Motor neuron (in vitro differentiated cells): ENCODE measurements at regions of chr11 and their contacts with region 1.

Region 1: DNA sequence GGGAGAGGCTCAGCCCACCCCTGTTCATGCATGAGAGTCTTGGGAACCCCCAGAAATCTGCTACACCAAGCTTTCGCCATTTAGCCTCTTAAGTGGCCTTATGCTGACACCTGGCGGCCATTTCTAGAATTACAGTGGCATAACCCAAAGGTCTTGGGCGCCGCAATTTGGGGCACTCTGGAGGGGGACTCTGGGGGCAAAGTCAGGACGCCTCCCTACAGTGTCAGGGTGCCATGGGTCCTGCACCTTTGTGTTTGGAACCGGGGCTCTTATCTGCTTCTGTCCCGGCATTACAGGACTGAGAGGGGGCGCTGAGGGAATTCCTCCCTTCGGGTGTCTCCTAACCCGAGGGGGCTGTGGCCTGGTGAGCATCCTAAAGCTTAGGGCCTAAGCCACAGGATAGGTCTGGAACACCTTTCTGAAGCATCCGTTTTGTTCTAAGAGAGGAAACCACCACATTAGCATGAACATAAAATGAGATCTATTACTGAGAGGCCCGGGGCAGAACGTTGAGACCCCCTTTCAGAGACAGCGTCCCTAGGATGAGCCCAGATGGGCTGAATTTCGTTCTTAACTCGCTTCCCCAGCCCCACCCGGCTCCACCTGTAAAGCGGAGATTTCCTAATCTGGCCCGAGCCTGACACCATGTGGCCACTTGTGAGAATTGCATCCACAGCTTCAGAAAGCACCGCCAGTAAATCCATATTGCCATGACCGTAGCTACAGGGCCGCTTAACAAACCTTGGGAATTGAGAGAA is 9.3 kb downstream of the INS start:
- ATAC-seq: peak; percentile 19 to 62 (median 57)
- H3K4me3 ChIP-seq: peak overlapping the region in 1 of 5 donors; percentile 12
- H3K27ac ChIP-seq: no peak overlapping the region
- H3K4me1 ChIP-seq: peaks cover 11 to 21% of the 10 kb centered on the region in 2 donors

Region 2: DNA sequence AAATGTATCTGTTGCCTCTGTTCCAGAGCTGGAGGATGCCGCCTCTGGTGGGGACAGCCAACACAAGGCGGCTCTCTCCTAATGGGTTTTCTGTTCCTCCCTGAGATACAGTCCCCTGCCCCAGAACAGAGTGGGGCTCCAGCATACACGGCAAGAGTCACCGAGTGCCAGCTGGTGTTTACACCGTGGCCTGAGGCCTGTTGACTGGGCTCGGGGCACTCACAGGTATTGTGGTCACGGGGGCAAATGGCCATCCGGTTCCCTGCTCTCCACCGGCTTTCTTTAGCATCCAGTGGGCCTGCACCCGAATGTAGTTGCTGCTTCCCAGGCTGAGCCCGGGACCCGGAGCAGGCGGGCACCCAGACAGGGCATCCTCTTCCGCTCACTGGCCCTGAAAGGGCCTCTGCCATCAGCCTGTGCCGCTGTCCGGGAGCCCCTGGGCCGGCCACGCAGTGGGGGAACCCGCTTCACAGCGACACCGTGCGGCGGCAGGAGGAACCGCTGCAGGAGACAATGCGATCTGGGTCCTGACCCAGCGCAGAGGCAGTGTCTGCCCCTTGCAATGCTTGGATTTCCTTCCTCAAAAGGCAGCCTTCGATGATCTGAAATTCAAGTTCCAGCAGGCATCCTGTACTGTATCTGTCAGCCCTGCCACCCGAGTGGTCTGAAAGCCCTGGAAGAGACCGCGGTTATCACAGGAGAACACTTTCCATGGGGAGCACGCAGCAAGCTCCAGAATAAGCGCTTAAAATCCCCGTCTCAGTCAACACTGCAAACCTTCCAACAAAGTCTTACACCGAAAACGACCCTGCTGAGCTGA is 523.0 kb before region 1 on chr11:
- in situ Hi-C with region 1: loop called in 1 of 9 experiments (anchors 25 kb)
- ATAC-seq: peak; percentile 72 to 98 (median 96)
- H3K4me3 ChIP-seq: no peak overlapping the region
- H3K27ac ChIP-seq: no peak overlapping the region
- H3K4me1 ChIP-seq: peaks cover 0 to 6% of the 10 kb centered on the region in 2 donors

Region 3: DNA sequence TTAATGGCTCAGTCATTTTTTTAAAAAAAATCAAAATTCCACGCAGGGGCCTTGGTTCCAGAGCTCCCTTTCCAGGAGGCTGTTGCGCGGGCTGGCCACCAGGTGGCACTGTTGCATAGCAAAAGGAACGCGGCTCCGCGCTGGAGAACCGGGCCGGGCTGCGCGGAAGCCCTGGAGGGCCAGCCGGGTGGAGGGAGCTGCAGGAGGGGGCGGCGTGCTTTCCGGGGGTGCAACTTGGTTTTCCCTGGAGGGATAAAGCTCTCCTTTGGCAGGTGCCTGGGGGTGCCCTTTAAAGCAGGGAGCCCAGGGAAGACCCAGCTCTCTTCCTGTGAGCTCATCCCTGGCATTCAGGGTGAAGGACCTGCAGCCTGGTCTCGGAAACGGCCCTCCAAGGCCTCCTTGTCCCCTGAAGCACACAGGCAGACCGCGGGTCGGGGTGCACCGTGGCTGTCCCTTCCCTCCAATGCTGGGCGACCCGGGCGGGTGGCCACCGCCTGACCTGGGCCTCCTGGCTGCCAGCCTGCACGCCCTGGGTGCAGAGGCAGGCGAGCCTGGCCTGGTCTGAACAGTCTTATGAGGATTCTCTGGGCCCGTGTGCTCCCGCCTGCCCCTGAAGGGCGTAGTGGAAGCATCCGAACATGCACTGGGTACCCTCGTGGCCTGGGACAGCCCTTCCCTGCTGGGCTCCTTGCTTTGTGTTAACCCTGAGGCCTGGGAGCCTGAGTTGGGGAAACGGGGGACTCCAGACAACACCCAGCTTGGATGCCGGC is 498.7 kb before region 1 on chr11:
- in situ Hi-C with region 1: loop called in 5 of 9 experiments (anchors 10 to 25 kb)
- ATAC-seq: peak; percentile 74 to 98 (median 84)
- H3K4me3 ChIP-seq: no peak overlapping the region
- H3K27ac ChIP-seq: no peak overlapping the region
- H3K4me1 ChIP-seq: peaks cover 13 to 18% of the 10 kb centered on the region in 2 donors

Region 4: DNA sequence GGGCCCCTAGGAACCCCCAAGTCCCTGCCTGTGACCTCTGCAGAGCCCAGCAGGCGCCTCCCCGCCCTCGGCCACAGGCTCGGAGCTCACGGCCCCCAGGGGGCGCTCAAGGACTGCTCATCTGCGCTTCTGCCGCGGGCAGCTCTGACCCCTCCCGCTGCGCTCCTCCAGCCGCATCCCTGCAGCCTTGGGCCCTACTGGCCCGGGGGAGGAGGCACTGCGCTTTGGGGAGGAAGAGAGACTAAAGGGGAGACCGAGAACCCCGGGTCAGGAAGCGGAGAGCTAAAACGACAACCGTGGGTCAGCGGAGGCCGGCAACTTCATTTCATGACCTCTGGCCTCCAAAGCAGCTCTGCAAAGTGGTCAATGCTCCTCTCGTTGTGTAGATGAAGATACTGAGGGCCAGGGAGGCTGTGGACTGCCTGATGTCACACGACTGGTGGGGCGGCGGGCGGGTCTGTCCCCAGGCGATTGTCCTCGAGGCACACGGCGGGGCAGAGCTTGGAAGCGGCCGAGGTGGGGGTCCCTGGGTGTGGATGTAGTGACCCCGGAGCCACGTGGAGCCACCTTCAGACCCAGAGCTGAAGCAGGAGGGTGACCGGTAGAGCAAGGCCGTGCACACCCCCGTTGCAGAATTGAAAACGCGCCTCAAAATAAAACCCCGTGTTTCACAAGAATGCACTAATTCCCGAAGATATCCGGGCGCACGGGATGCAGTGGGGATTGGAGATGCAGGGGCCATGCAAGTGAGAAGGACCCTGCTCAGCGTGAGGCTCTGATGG is 457.4 kb before region 1 on chr11:
- in situ Hi-C with region 1: loop called in 2 of 9 experiments (anchors 10 to 25 kb)
- ATAC-seq: peak; percentile 86 to 96 (median 91)
- H3K4me3 ChIP-seq: peak overlapping the region in 4 of 5 donors; percentile 32 to 41 (median 34)
- H3K27ac ChIP-seq: no peak overlapping the region
- H3K4me1 ChIP-seq: peaks cover 3 to 8% of the 10 kb centered on the region in 2 donors

Region 5: DNA sequence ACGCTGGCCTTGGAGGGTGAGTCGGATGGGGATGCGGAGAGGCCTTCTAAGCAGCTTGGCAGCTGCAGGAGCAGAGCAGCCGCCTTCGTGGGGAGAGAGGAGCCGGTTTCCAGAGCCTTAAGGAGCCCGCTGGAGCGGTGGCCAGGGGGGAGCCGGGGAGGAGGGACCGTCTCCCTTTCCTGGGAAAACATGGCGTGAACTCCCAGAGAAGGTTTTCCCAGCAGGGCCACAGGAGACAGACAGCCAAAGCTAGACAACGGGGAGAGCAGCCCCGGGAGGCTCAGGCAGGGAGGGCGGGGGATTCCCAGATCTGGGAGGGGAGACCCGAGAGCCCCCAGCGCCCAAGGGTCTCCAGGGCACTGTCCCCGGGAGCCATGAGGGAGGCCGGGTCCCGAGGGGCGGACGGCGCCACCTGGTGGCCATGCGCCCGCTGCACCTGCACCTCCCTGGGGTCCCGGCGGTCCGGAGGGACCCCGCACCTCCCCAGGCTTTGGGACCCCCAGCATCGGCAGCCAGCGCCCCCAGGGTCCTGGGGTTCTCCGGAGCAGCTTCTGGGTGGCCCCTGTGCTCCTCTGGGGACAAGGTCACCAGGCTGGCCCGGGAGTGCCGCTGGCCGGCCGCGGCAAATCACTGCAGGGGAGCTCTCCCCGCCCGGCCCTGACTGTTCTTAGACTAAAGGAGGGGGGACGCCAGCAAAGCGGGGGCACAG is 319.3 kb before region 1 on chr11:
- in situ Hi-C with region 1: no loop called
- ATAC-seq: peak; percentile 81 to 93 (median 86)
- H3K4me3 ChIP-seq: peak overlapping the region in 1 of 5 donors; percentile 16
- H3K27ac ChIP-seq: no peak overlapping the region
- H3K4me1 ChIP-seq: peaks cover 0 to 4% of the 10 kb centered on the region in 2 donors

Region 6: DNA sequence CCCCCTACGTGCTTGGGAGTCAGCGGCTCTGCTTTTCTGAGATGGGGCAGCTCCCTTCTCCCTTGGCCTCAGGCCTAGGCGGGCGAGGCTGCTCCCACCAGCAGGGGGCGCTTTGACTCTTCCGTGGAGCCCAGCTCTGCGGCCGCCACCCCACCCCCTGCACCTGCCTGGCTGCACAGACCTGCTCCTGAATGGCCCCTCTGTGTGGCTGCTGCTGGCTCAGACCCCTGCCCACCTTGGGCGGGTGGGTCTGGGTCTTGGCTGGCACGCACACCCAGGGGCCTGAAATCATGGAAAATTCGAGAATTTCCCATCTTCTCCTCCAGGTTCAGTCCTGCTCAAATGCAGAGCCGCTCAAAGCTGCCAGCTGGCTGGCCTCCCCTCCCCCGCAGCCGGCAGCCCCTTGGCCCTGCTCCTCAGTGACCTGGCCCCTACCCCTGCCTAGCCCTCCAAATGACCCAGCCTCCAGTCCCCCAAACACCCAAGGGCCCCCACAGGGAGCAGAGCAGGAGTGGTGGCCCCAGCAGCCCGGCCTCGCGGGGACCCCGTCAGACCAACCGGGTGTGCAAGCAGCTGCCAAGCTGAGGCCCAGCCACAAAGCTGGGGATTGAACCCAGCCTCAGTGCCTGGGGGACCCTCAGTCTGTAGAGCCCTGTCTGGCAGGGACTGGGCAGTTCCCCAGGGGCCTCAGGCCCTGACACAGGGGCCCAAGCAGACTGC is 269.0 kb before region 1 on chr11:
- in situ Hi-C with region 1: loop called in 1 of 9 experiments (anchors 25 kb)
- ATAC-seq: peak; percentile 56 to 99 (median 98)
- H3K4me3 ChIP-seq: no peak overlapping the region
- H3K27ac ChIP-seq: no peak overlapping the region
- H3K4me1 ChIP-seq: peaks cover 4 to 7% of the 10 kb centered on the region in 2 donors